B cell (primary cell): ENCODE measurements at regions of chr14 and their contacts with region 1.

Region 1: DNA sequence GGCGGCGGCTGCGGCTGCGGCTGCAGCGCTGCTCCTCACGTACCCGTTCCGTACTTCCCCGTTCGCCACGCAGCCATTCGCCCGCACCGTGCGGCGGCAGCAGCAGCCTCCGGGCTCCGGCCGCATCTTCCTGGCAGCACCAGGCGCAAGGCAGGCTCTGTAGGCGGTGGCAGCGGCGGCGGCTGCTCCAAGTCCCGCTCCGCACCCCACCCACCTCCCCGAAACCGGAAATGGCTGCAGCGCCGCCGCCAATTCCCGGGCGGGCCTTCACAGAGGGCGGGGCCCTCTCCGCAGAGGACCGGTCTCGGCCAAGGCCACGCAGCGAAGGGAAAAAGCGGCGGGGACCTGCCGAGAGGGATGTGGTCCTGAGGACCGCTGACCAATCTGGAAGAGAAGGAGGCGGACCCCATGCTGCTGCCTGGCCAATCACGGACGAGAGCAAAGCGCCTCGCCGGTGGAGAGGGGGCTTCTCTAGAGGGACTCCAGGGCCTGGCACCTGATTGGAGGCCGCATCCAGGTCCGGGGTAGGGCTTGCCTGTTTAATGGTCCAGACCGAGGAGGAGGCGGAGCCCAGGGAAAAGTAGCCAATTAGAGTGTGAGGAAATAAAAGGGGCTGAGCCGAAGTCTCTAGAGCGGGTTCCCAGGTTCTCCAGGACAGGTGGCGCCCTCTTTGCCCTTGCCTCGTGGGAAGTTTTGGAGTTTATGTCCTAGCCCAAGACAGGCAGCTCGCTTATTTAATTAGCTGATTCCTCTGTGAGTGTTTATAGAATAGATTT is at the start of gene SPTLC2:
- DNase-seq: peak; percentile 99
- ATAC-seq: peak; percentile 94
- H3K4me3 ChIP-seq: peak within 1 kb of the TSS; percentile 67 to 93 (median 76)
- H3K4me3 Mint-ChIP-seq: peak within 1 kb of the TSS; percentile 95
- H3K27ac ChIP-seq: peak within 1 kb of the TSS; percentile 75 to 78
- H3K27ac Mint-ChIP-seq: peak within 1 kb of the TSS; percentile 91
- H3K4me1 ChIP-seq: peaks cover 28% of the 10 kb centered on the region in 2 donors
- H3K4me1 Mint-ChIP-seq: peaks cover 40% of the 10 kb centered on the region
- H3K27me3 ChIP-seq: no peaks in the 10 kb centered on the region
- H3K27me3 Mint-ChIP-seq: no peaks in the 10 kb centered on the region
- CTCF ChIP-seq: no peak
- total RNA-seq, gene SPTLC2: 41.4 and 52.2 TPM in 2 replicates

Region 2: GRCh38 chr14:76812211-76813044 is 804.2 kb before region 1 on chr14 and contains the start of gene ANGEL1:
- CTCF ChIA-PET with region 1: no interaction called
- POLR2A ChIA-PET with region 1: no interaction called
- intact Hi-C with region 1: loop called (anchors 10 kb)
- DNase-seq: peak; percentile 99
- ATAC-seq: peak; percentile 95
- H3K4me3 ChIP-seq: peak within 1 kb of the TSS; percentile 31 to 79 (median 72)
- H3K4me3 Mint-ChIP-seq: peak within 1 kb of the TSS; percentile 90
- H3K27ac ChIP-seq: peak within 1 kb of the TSS; percentile 65 to 84
- H3K27ac Mint-ChIP-seq: peak within 1 kb of the TSS; percentile 99
- H3K4me1 ChIP-seq: peaks cover 20 to 25% of the 10 kb centered on the region in 2 donors
- H3K4me1 Mint-ChIP-seq: peaks cover 28% of the 10 kb centered on the region
- H3K27me3 ChIP-seq: peaks cover 0 to 5% (median 2%) of the 10 kb centered on the region in 4 experiments
- H3K27me3 Mint-ChIP-seq: no peaks in the 10 kb centered on the region
- CTCF ChIP-seq: no peak
- total RNA-seq, gene ANGEL1: 25.2 and 27.3 TPM in 2 replicates

Region 3: GRCh38 chr14:77376771-77377501 is 239.7 kb before region 1 on chr14 and contains the starts of genes SAMD15 and TMED8:
- CTCF ChIA-PET with region 1: no interaction called
- POLR2A ChIA-PET with region 1: no interaction called
- intact Hi-C with region 1: loop called (anchors 2 kb)
- DNase-seq: peak; percentile 92
- ATAC-seq: peak; percentile 92
- H3K4me3 ChIP-seq: peak within 1 kb of the TSS; percentile 79 to 100 (median 93)
- H3K4me3 Mint-ChIP-seq: peak within 1 kb of the TSS; percentile 95
- H3K27ac ChIP-seq: peak within 1 kb of the TSS; percentile 18 to 85
- H3K27ac Mint-ChIP-seq: peak within 1 kb of the TSS; percentile 91
- H3K4me1 ChIP-seq: peaks cover 39 to 43% of the 10 kb centered on the region in 2 donors
- H3K4me1 Mint-ChIP-seq: peaks cover 40% of the 10 kb centered on the region
- H3K27me3 ChIP-seq: no peaks in the 10 kb centered on the region
- H3K27me3 Mint-ChIP-seq: no peaks in the 10 kb centered on the region
- CTCF ChIP-seq: peak; percentile 48
- total RNA-seq, gene SAMD15: 0.96 and 1.00 TPM in 2 replicates
- total RNA-seq, gene TMED8: 43.8 and 44.7 TPM in 2 replicates

Region 4: DNA sequence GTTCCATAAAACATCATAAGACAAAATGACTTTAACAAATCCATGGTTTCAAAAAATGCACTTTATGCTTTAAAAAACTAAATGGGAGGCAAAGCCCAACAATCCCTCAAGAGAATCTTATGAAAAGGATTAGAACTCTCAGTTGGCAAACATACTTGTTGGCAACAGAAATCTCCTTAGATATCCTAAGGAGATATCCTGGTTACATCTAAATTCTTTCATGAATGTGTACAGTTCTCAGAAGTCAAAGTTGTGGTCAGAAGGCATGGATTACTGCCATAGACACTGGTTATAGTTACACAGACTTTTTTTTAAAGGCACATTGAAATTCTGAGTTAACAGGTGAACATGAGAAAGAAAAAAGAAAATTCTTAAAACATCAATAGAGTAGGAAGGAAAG is 100.5 kb before region 1 on chr14:
- CTCF ChIA-PET with region 1: no interaction called
- POLR2A ChIA-PET with region 1: no interaction called
- intact Hi-C with region 1: no loop called
- DNase-seq: no peak
- ATAC-seq: no peak
- H3K4me3 ChIP-seq: no peak overlapping the region
- H3K4me3 Mint-ChIP-seq: no peak overlapping the region
- H3K27ac ChIP-seq: no peak overlapping the region
- H3K27ac Mint-ChIP-seq: no peak overlapping the region
- H3K4me1 ChIP-seq: no peaks in the 10 kb centered on the region
- H3K4me1 Mint-ChIP-seq: no peaks in the 10 kb centered on the region
- H3K27me3 ChIP-seq: no peaks in the 10 kb centered on the region
- H3K27me3 Mint-ChIP-seq: no peaks in the 10 kb centered on the region
- CTCF ChIP-seq: no peak

Region 5: GRCh38 chr14:77593501-77593961 is 23.1 kb before region 1 on chr14:
- CTCF ChIA-PET with region 1: no interaction called
- POLR2A ChIA-PET with region 1: interaction called, 3 read pairs
- intact Hi-C with region 1: loop called (anchors 1 kb)
- DNase-seq: peak; percentile 83
- ATAC-seq: peak; percentile 77
- H3K4me3 ChIP-seq: peak overlapping the region; percentile 22 to 77 (median 41)
- H3K4me3 Mint-ChIP-seq: peak overlapping the region; percentile 86
- H3K27ac ChIP-seq: peak overlapping the region; percentile 91 to 95
- H3K27ac Mint-ChIP-seq: peak overlapping the region; percentile 95
- H3K4me1 ChIP-seq: peaks cover 86 to 87% of the 10 kb centered on the region in 2 donors
- H3K4me1 Mint-ChIP-seq: peaks cover 78% of the 10 kb centered on the region
- H3K27me3 ChIP-seq: no peaks in the 10 kb centered on the region
- H3K27me3 Mint-ChIP-seq: no peaks in the 10 kb centered on the region
- CTCF ChIP-seq: no peak

Region 6: GRCh38 chr14:77707724-77708408 is 91.2 kb after region 1 on chr14 and contains the starts of genes ALKBH1 and SLIRP:
- CTCF ChIA-PET with region 1: no interaction called
- POLR2A ChIA-PET with region 1: no interaction called
- intact Hi-C with region 1: loop called (anchors 1 kb)
- DNase-seq: peak; percentile 91
- ATAC-seq: peak; percentile 97
- H3K4me3 ChIP-seq: peak within 1 kb of the TSS; percentile 82 to 98 (median 92)
- H3K4me3 Mint-ChIP-seq: peak within 1 kb of the TSS; percentile 94
- H3K27ac ChIP-seq: peak within 1 kb of the TSS in 1 of 2 donors; percentile 75
- H3K27ac Mint-ChIP-seq: peak within 1 kb of the TSS; percentile 91
- H3K4me1 ChIP-seq: peaks cover 22 to 32% of the 10 kb centered on the region in 2 donors
- H3K4me1 Mint-ChIP-seq: peaks cover 37% of the 10 kb centered on the region
- H3K27me3 ChIP-seq: no peaks in the 10 kb centered on the region
- H3K27me3 Mint-ChIP-seq: no peaks in the 10 kb centered on the region
- CTCF ChIP-seq: no peak
- total RNA-seq, gene ALKBH1: 19.0 and 21.8 TPM in 2 replicates
- total RNA-seq, gene SLIRP: 30.6 and 33.8 TPM in 2 replicates